CD4-positive, alpha-beta T cell (primary cell): ENCODE measurements at regions of chr3 and their contacts with region 1.

Region 1: DNA sequence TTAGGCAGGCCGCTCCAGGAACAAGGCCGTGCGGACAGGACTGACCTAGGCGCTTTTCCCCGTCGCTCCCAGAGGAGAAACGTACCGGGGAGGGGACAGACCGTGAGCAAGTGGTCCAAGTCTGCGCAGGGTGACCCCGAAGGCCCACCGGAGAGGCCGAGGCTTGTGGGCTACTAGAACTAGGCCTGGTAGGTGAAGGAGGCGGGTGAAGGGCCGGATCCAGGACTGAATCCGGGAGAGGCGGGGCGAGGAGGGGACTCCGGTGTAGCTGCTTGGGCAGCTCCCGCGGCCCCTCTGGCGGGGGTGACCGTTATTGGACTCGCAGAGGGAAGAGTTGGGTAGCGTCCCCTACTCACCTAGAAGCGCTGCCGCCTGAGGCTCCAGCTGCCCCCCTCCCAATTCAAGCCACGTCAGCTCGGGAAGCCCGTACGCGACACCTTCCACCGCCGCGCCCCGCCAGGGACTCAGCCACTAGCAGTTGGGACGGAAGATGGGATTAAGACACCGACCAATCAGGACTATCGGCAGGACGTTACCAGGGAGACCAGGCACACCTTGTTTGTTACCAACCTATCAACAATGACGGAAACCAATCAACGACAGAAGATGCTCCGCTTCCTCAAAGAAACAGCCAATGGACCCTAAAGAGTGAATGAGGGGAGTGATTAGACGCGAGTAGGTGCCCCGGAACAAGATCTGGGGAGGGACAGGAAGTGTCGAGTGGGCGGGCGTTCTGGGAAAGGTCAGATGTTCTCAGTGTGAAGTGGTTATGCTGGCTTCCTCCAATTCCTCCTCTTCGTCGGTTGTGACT is at the start of gene GOLGB1:
- DNase-seq: peak; percentile 80 to 99 (median 86)
- ATAC-seq: peak; percentile 95
- H3K4me3 ChIP-seq: peak within 1 kb of the TSS; percentile 77
- H3K4me3 Mint-ChIP-seq: no peak within 1 kb of the TSS
- H3K27ac ChIP-seq: peak within 1 kb of the TSS; percentile 92 to 96
- H3K27ac Mint-ChIP-seq: no peak within 1 kb of the TSS
- H3K4me1 ChIP-seq: peaks cover 17% of the 10 kb centered on the region
- H3K4me1 Mint-ChIP-seq: peaks cover 5% of the 10 kb centered on the region
- H3K27me3 ChIP-seq: no peaks in the 10 kb centered on the region
- H3K27me3 Mint-ChIP-seq: peaks cover 12% of the 10 kb centered on the region
- CTCF ChIP-seq: no peak
- total RNA-seq, gene GOLGB1: 49.8 to 50.2 TPM

Region 2: DNA sequence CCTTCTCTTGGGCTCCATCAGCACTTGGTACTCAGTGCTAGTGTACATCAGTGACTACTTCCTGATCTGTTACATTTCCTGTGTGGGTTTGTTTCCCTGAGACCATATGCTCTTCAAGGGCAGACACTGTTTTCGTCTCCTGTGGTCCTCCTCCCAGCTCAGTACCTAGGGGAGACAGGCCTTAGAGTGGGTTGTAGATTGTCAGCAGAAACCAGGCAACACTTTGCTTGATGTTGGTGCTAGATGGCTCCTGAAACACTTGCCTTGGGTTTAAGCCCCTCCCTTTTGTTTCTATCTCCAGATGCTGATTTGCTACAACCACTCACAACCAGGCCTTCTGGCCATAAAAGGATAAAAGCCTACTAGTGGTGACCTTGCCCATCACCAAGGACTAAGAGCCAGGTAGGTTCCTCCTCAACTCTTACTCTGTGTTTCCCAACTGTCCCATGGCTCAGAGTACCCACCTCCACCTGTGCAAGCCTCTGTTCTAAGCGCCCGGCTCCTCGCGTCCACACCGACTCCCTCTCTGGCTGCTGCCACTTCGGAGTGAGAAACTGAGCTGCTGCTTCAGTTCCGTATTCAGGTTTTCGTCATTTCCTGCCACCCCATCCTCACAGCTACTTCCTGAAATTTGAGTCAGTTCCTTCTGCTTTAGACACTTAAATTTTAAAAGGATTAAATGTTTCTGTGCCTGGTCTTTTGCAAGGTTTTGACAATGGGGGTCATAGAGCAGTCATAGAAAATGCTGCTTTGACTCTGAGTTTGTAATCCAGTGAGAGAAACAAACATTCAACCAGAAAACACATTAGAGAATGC is 88.9 kb before region 1 on chr3 and contains the start of gene HCLS1:
- CTCF ChIA-PET with region 1: no interaction called
- POLR2A ChIA-PET with region 1: interaction called, 6 read pairs
- intact Hi-C with region 1: loop called (anchors 1 to 2 kb)
- DNase-seq: peak; percentile 46 to 89 (median 62)
- ATAC-seq: peak; percentile 83
- H3K4me3 ChIP-seq: peak within 1 kb of the TSS; percentile 61
- H3K4me3 Mint-ChIP-seq: peak within 1 kb of the TSS; percentile 94
- H3K27ac ChIP-seq: peak within 1 kb of the TSS; percentile 83 to 97
- H3K27ac Mint-ChIP-seq: peak within 1 kb of the TSS; percentile 96
- H3K4me1 ChIP-seq: peaks cover 48% of the 10 kb centered on the region
- H3K4me1 Mint-ChIP-seq: peaks cover 55% of the 10 kb centered on the region
- H3K27me3 ChIP-seq: no peaks in the 10 kb centered on the region
- H3K27me3 Mint-ChIP-seq: no peaks in the 10 kb centered on the region
- CTCF ChIP-seq: no peak
- total RNA-seq, gene HCLS1: 204 to 206 TPM

Region 3: DNA sequence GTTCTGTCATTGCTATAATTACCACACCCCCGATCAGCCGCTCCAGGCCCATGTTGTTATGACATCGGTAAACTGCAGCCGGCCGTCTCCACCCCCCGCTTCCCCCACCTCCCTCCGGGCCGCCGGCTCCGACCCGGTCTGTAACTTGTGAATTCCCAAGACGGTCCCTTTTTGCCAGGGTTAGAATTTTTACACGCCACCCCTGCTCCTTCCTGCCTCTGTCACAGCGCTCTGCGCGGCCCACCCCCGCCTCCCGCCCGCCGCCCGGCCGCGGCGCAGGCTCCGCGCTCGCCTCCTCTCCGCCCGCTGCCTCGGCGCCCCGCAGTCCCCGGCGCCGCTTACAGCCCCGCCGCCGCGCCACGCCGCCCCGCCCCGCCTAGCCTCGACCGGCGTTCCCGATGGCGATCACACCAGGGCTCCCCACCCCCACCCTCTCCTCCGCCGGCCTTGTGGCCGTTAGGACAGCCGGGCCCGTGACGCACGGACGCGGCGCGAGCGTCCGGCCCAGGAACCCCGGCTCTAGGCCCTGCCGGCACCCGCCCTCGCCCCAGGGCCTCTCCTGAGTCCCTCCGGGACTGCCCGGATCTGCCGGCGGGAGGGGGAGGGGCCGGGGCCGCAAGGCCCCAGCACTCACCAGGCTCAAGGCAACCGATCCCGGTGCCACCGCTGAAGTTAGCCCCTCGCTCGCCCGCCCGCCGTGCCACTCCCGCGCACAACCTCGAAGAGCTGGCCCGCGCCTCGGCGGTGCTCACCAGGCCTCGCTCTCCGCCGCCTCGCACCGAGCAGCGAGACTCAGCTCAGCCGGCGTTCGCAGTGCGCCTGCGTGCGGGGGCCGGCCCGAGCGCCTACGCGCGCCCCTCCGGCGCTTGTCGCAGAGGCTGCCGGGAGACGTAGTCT is 764.9 kb after region 1 on chr3 and contains the start of gene KPNA1:
- CTCF ChIA-PET with region 1: no interaction called
- POLR2A ChIA-PET with region 1: no interaction called
- intact Hi-C with region 1: loop called in 1 of 2 experiments (anchors 5 kb)
- DNase-seq: peak; percentile 70 to 95 (median 82)
- ATAC-seq: peak; percentile 85
- H3K4me3 ChIP-seq: peak within 1 kb of the TSS; percentile 68
- H3K4me3 Mint-ChIP-seq: peak within 1 kb of the TSS; percentile 89
- H3K27ac ChIP-seq: peak within 1 kb of the TSS; percentile 83 to 97
- H3K27ac Mint-ChIP-seq: peak within 1 kb of the TSS; percentile 82
- H3K4me1 ChIP-seq: peaks cover 17% of the 10 kb centered on the region
- H3K4me1 Mint-ChIP-seq: peaks cover 44% of the 10 kb centered on the region
- H3K27me3 ChIP-seq: no peaks in the 10 kb centered on the region
- H3K27me3 Mint-ChIP-seq: no peaks in the 10 kb centered on the region
- CTCF ChIP-seq: no peak
- total RNA-seq, gene KPNA1: 46.2 to 49.8 TPM

Region 4: GRCh38 chr3:123201566-123202427 is 1452.3 kb after region 1 on chr3 and contains the start of gene SEC22A:
- CTCF ChIA-PET with region 1: no interaction called
- POLR2A ChIA-PET with region 1: no interaction called
- intact Hi-C with region 1: loop called in 1 of 2 experiments (anchors 2 kb)
- DNase-seq: peak; percentile 88 to 99 (median 94)
- ATAC-seq: peak; percentile 95
- H3K4me3 ChIP-seq: peak within 1 kb of the TSS; percentile 88
- H3K4me3 Mint-ChIP-seq: peak within 1 kb of the TSS; percentile 89
- H3K27ac ChIP-seq: peak within 1 kb of the TSS; percentile 96 to 98
- H3K27ac Mint-ChIP-seq: peak within 1 kb of the TSS; percentile 98
- H3K4me1 ChIP-seq: peaks cover 20% of the 10 kb centered on the region
- H3K4me1 Mint-ChIP-seq: peaks cover 44% of the 10 kb centered on the region
- H3K27me3 ChIP-seq: no peaks in the 10 kb centered on the region
- H3K27me3 Mint-ChIP-seq: no peaks in the 10 kb centered on the region
- CTCF ChIP-seq: no peak
- total RNA-seq, gene SEC22A: 7.9 to 11.5 TPM